ENCODE measurements at regions of chr6 and their contacts with region 1.

Region 1: DNA sequence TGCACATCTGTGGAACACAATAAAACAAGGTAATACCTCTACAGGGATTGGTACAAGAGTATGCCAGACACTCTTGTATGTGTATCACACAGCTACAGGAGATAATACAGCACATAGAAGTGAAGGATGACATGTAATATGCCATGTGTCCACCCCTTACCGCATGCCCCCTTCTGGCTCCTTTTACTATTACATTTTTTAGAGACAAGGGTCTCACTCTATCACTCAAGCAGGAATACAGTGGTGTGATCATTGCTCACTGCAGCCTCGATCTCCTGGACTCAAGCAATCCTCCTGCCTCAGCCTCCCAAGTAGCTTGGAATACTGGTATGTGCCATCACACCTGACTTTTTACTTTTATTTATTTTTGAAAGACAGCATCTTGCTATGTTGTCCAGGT is 4.2 kb upstream of the NCR3 start:
- DNase-seq: peak in 7 of 9 donors; percentile 68 to 83 (median 79)
- ATAC-seq: peak; percentile 89
- H3K4me3 ChIP-seq: no peak overlapping the region
- H3K4me3 Mint-ChIP-seq: peak overlapping the region in 9 of 10 donors; percentile 38 to 68 (median 55)
- H3K27ac ChIP-seq: peak overlapping the region; percentile 47
- H3K27ac Mint-ChIP-seq: peak overlapping the region; percentile 52 to 95 (median 81)
- H3K4me1 ChIP-seq: peaks cover 34 to 44% of the 10 kb centered on the region in 2 donors
- H3K4me1 Mint-ChIP-seq: peaks cover 34 to 60% (median 55%) of the 10 kb centered on the region in 7 donors
- H3K27me3 ChIP-seq: no peaks in the 10 kb centered on the region
- H3K27me3 Mint-ChIP-seq: no peaks in the 10 kb centered on the region

Region 2: DNA sequence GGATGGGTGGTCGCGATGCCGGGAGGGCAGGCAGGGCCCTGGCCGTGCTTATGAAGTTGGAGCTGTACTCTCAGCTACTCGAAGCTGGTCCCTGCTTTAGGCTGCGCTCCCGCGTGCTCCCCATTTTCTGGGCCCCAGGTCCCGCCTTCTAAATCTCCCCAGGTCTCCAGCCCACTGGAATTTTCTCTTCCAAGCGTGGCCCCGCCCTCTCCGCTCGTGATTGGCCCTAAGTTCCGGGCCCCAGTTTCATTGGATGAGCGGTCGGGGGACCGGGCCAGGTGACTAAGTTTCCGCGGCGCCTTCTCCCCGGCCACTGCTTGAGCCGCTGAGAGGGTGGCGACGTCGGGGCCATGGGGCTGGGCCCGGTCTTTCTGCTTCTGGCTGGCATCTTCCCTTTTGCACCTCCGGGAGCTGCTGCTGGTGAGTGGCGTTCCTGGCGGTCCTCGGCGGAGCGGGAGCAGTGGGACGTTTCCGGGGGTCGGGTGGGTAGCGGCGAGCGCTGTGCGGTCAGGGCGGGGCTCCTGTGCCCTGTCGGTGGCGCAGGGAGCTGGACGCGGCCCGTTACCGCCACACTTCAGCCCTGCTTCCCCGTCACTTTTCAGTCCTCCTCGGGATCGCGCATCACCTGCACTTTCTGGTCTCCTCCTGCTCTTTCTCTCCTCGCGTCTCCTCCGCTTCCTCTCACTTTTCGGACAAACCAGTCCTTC is 193.6 kb before region 1 on chr6 and contains the start of gene MICA:
- CTCF ChIA-PET with region 1: no interaction called
- POLR2A ChIA-PET with region 1: no interaction called
- intact Hi-C with region 1: loop called in 1 of 2 experiments (anchors 5 kb)
- DNase-seq: peak in 8 of 9 donors; percentile 32 to 79 (median 41)
- ATAC-seq: peak; percentile 71
- H3K4me3 ChIP-seq: peak within 1 kb of the TSS; percentile 79
- H3K4me3 Mint-ChIP-seq: peak within 1 kb of the TSS; percentile 83 to 98 (median 90)
- H3K27ac ChIP-seq: peak within 1 kb of the TSS; percentile 76
- H3K27ac Mint-ChIP-seq: peak within 1 kb of the TSS; percentile 25 to 94 (median 78)
- H3K4me1 ChIP-seq: peaks cover 17 to 19% of the 10 kb centered on the region in 2 donors
- H3K4me1 Mint-ChIP-seq: peaks cover 64 to 90% (median 70%) of the 10 kb centered on the region in 7 donors
- H3K27me3 ChIP-seq: no peaks in the 10 kb centered on the region
- H3K27me3 Mint-ChIP-seq: peaks cover 0 to 2% (median 0%) of the 10 kb centered on the region in 5 donors
- total RNA-seq, gene MICA: 12.1 to 17.4 (median 15.2) TPM

Region 3: GRCh38 chr6:31541658-31542521 is 55.1 kb before region 1 on chr6 and contains the start of gene DDX39B:
- CTCF ChIA-PET with region 1: interaction called, 501 read pairs
- POLR2A ChIA-PET with region 1: interaction called, 3,078 read pairs
- intact Hi-C with region 1: loop called (anchors 1 kb)
- DNase-seq: peak; percentile 80 to 97 (median 94)
- ATAC-seq: peak; percentile 83
- H3K4me3 ChIP-seq: peak within 1 kb of the TSS; percentile 77
- H3K4me3 Mint-ChIP-seq: peak within 1 kb of the TSS; percentile 84 to 99 (median 98)
- H3K27ac ChIP-seq: peak within 1 kb of the TSS; percentile 97
- H3K27ac Mint-ChIP-seq: peak within 1 kb of the TSS; percentile 90 to 100 (median 100)
- H3K4me1 ChIP-seq: peaks cover 34 to 45% of the 10 kb centered on the region in 2 donors
- H3K4me1 Mint-ChIP-seq: peaks cover 34 to 65% (median 55%) of the 10 kb centered on the region in 7 donors
- H3K27me3 ChIP-seq: no peaks in the 10 kb centered on the region
- H3K27me3 Mint-ChIP-seq: no peaks in the 10 kb centered on the region
- total RNA-seq, gene DDX39B: 443 to 761 (median 546) TPM

Region 4: DNA sequence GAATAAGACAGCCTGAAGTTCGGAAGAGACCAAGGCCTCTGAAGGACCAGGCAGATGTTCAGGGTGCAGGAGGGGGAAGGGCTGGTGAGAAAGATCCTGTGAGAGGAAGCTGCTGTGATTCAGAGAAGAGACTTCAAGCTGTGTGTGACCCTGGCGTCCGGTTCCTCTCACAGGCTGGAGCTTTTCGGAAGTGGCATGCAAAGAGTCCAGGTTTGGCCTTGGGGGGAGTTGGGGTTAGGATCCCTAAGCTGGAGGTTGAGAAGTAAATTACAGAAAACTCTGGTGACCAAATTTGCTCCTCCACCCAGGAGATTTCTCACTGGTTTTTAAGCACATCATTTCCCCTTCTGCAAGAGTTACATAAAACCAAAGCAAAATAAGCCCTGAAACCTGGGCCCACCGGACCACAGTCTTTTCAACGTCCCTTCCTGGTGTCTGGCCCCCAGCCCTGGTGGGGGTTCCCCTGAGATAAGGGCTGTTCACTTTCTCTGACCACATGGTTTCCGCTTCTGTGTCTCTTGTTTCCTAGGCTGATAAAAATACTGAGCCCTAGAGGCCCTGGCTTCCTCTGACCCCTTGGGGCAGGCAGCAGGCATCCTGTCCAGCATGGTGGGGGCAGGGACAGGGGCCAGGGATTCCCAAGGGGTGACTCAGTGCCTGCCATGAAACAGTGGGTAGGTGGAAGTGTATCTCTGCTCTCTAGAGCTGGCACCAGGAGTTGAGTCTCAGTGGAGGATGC is 36.9 kb before region 1 on chr6:
- CTCF ChIA-PET with region 1: interaction called, 57 read pairs
- POLR2A ChIA-PET with region 1: interaction called, 3,078 read pairs
- intact Hi-C with region 1: no loop called
- DNase-seq: peak in 1 of 9 donors; percentile 34
- ATAC-seq: peak; percentile 79
- H3K4me3 ChIP-seq: peak overlapping the region; percentile 48
- H3K4me3 Mint-ChIP-seq: peak overlapping the region; percentile 66 to 87 (median 82)
- H3K27ac ChIP-seq: peak overlapping the region; percentile 57
- H3K27ac Mint-ChIP-seq: peak overlapping the region; percentile 84 to 92 (median 89)
- H3K4me1 ChIP-seq: peaks cover 42 to 60% of the 10 kb centered on the region in 2 donors
- H3K4me1 Mint-ChIP-seq: peaks cover 55 to 78% (median 65%) of the 10 kb centered on the region in 7 donors
- H3K27me3 ChIP-seq: no peaks in the 10 kb centered on the region
- H3K27me3 Mint-ChIP-seq: peaks cover 0 to 27% (median 0%) of the 10 kb centered on the region in 5 donors

Region 5: DNA sequence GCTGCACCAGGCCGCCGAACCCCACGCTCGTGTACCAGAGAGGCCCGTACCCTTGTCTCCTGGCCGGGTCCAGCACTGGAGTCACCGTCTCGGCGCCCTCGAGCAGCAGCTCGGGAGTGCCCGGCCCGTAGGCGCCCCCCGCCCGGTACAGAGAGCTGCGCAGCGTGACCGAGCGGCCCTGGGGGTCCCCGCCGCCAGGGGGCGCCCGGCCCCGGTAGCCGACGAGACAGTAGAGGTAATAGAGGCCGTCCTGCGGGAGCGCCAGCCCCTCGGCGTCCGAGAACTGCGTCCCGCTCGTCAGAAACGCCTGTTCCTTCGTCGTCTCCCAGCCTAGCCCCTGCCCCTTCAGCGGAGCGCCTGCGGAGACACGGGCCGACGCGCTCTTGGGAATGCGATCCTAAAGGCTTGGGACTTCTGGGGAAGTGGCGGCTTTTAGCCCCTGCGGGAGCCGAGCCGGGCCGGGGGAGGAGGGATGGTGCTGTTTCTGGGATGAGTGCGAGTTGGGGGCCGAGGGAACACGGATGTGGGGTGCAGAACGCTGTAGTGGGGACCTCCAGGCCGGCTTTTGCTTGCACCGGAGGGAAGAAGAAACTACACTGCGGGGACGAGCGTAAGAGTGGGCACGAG is 16.1 kb before region 1 on chr6:
- CTCF ChIA-PET with region 1: interaction called, 687 read pairs
- POLR2A ChIA-PET with region 1: interaction called, 3,078 read pairs
- intact Hi-C with region 1: loop called (anchors 1 kb)
- DNase-seq: peak; percentile 79 to 96 (median 88)
- ATAC-seq: peak; percentile 87
- H3K4me3 ChIP-seq: peak overlapping the region; percentile 97
- H3K4me3 Mint-ChIP-seq: peak overlapping the region; percentile 88 to 100 (median 99)
- H3K27ac ChIP-seq: peak overlapping the region; percentile 97
- H3K27ac Mint-ChIP-seq: peak overlapping the region; percentile 94 to 100 (median 97)
- H3K4me1 ChIP-seq: peaks cover 54 to 60% of the 10 kb centered on the region in 2 donors
- H3K4me1 Mint-ChIP-seq: peaks cover 47 to 80% (median 63%) of the 10 kb centered on the region in 7 donors
- H3K27me3 ChIP-seq: no peaks in the 10 kb centered on the region
- H3K27me3 Mint-ChIP-seq: no peaks in the 10 kb centered on the region

Region 6: GRCh38 chr6:31614684-31615578 is 17.9 kb after region 1 on chr6 and contains the start of gene AIF1:
- CTCF ChIA-PET with region 1: interaction called, 26 read pairs
- POLR2A ChIA-PET with region 1: interaction called, 26 read pairs
- intact Hi-C with region 1: loop called in 1 of 2 experiments (anchors 1 kb)
- DNase-seq: no peak
- ATAC-seq: no peak
- H3K4me3 ChIP-seq: peak within 1 kb of the TSS; percentile 59
- H3K4me3 Mint-ChIP-seq: peak within 1 kb of the TSS; percentile 77 to 91 (median 86)
- H3K27ac ChIP-seq: peak within 1 kb of the TSS; percentile 70
- H3K27ac Mint-ChIP-seq: peak within 1 kb of the TSS; percentile 79 to 94 (median 90)
- H3K4me1 ChIP-seq: peaks cover 3 to 26% of the 10 kb centered on the region in 2 donors
- H3K4me1 Mint-ChIP-seq: peaks cover 23 to 49% (median 42%) of the 10 kb centered on the region in 7 donors
- H3K27me3 ChIP-seq: no peaks in the 10 kb centered on the region
- H3K27me3 Mint-ChIP-seq: peaks cover 0 to 3% (median 0%) of the 10 kb centered on the region in 5 donors
- total RNA-seq, gene AIF1: 33.1 to 160 (median 62.0) TPM